ENCODE measurements at regions of chr1 and their contacts with region 1.

Region 1: DNA sequence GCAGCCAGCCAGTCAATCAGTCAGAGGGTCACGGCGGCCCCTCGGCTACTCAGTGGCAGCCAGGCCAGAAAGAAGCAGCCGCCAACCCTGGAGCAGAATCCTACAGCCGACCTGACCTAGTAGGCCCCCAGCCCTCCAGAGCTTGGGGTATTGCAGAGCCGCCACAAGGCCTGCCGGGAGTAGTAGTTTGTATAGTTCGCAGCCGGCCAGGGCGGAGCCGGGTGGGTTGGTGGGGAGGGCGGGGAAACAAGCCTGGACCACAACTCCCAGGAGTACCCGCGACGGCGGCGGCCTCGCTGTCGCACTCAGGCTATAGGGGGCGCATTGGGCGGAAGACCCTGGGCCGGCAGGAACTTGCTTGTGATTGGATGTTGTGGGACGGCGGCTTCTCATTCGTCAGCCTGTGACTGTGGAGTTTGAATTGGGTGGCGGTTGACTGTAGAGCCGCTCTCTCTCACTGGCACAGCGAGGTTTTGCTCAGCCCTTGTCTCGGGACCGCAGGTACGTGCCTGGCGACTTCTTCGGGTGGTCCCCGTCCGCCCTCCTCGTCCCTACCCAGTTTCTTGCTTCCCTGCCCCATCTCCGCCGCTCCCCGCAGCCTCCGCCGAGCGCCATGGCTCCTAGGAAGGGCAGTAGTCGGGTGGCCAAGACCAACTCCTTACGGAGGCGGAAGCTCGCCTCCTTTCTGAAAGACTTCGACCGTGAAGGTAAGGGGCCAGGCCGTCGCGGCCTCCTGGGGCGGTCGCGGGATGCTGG is at the start of gene CDCA8:
- DNase-seq: peak; percentile 99
- total RNA-seq, gene CDCA8: 0.27 TPM

Region 2: GRCh38 chr1:37474046-37474759 is 218.1 kb before region 1 on chr1 and contains the start of gene ZC3H12A:
- intact Hi-C with region 1: loop called (anchors 5 kb)
- DNase-seq: peak; percentile 95
- total RNA-seq, gene ZC3H12A: 3.3 TPM

Region 3: DNA sequence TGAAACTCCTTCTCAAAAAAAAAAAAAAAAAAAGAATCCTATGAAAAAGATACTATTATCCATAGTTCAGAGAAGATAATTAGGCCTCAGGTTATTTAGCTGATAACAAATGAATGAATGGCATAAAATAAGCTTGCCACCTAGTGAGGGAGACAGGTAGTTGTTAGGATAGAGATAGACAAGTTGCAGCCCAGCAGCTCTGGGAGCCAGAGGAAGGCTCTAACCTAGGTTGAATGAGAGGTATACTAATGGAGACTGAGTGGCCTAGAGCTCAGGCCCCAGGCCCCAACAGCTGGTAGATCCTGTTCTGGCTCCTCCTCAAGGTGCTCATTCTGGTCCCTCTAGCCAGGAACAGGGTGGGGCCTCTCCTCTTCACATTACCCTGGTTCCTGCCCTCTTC is 37.0 kb before region 1 on chr1:
- intact Hi-C with region 1: no loop called
- DNase-seq: no peak

Region 4: GRCh38 chr1:37859507-37860345 is 167.5 kb after region 1 on chr1 and contains the start of gene MTF1:
- intact Hi-C with region 1: loop called (anchors 2 kb)
- DNase-seq: peak; percentile 99
- total RNA-seq, gene MTF1: 16.0 TPM

Region 5: DNA sequence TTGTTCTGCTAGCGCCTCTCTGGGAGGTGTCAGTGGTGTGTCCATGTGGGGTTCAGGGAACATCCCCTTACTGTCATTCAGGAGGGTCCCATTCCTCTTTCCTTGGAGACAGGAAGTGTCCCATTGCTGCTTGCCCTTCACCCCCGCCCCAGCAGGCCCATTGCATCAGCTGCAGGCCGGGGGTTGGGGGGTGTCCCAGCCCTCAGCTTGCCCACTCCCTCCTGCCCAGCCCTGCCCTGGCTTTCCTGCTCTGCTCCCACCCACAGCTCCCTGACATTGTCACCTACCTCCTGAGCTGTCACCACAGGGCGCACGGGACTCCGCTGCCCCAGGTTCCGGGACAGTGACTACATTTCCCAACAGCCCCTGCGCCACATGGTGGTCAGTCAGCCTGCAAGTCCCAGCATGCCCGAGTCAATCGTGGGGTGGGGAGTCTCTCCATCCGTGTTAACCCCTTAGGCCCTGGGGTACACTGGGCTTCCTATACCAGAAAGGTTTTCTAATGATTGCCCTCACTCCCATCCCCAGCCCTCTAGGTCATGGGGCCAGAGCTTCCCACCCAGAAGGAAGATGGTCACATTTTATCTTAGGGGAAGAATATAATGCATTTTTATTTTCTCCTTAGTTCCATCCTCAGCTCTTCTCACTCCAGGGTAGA is 254.6 kb after region 1 on chr1 and contains the start of gene INPP5B:
- intact Hi-C with region 1: loop called (anchors 5 kb)
- DNase-seq: peak; percentile 95
- total RNA-seq, gene INPP5B: 13.7 TPM

Measured in cardiac septum (tissue), 1 donor.